Mucosa of descending colon (tissue), 3 donors: ENCODE measurements at regions of chr2 and their contacts with region 1.

Region 1: GRCh38 chr2:39179974-39180970 is 59.4 kb upstream of the SOS1 start:
- DNase-seq: peak in 1 of 3 donors; percentile 12
- ATAC-seq: peak; percentile 60
- H3K4me3 ChIP-seq: no peak overlapping the region
- H3K4me1 ChIP-seq: peaks cover 9% of the 10 kb centered on the region
- CTCF ChIP-seq: no peak

Region 2: GRCh38 chr2:39657287-39657937 is 477.1 kb after region 1 on chr2:
- intact Hi-C with region 1: loop called in 1 of 2 experiments (anchors 10 kb)
- DNase-seq: no peak
- ATAC-seq: no peak
- H3K4me3 ChIP-seq: no peak overlapping the region
- H3K4me1 ChIP-seq: no peaks in the 10 kb centered on the region
- CTCF ChIP-seq: no peak